ENCODE measurements at regions of chr5 and their contacts with region 1.

Region 1: GRCh38 chr5:88660947-88661805 is 221.8 kb downstream of the MEF2C start:
- DNase-seq: peak; percentile 96 to 100 (median 99)

Region 2: GRCh38 chr5:88281322-88281721 is 379.9 kb before region 1 on chr5:
- intact Hi-C with region 1: loop called (anchors 10 kb)
- DNase-seq: no peak

Region 3: DNA sequence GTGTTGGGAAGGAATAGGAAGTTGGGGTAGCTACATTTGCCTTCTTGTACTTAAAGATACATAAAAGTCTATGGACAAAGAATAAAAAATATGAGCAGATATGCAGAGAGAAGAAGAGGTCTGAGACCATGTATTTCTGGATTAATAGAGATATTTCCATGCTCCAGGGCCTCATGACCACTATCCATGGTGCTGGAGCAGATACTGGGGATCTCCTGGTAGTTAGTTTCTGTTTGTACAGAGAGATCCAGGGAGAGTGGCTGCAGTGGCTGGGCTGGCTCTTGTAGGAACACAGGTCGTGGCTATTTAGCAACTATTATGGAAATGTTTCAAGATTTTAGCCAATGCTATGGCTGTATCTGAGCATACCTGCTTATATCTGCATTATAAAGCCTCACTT is 208.4 kb before region 1 on chr5:
- intact Hi-C with region 1: no loop called
- DNase-seq: no peak

Region 4: GRCh38 chr5:88551724-88552345 is 109.3 kb before region 1 on chr5:
- intact Hi-C with region 1: loop called (anchors 5 kb)
- DNase-seq: peak in 9 of 10 donors; percentile 18 to 85 (median 30)

Region 5: GRCh38 chr5:88680253-88681132 is 19.3 kb after region 1 on chr5:
- intact Hi-C with region 1: loop called (anchors 2 kb)
- DNase-seq: peak; percentile 80 to 97 (median 90)